ENCODE measurements at regions of chr11 and their contacts with region 1.

Region 1: DNA sequence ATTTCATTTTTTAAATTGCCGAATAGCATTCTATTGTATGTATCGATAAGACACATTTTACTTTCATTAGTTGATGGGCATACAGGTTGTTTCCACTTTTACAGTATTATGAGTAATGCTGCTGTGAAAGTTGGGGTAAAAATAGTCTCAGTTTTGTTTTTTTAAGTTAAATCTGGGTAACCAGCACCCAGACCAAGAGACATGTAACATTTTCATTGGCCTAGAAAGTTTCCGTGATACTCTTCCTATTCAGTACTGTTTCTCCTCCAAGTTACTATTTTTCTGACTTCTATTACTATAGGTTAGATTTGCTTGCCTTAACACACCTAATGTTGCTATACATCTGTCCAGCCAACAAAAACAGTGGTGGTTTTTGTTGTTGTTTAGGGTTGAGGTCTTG is 12.3 kb downstream of the IPO7 start:
- DNase-seq: no peak
- H3K4me3 ChIP-seq: no peak overlapping the region
- H3K27ac ChIP-seq: no peak overlapping the region
- H3K4me1 ChIP-seq: no peaks in the 10 kb centered on the region
- H3K27me3 ChIP-seq: no peaks in the 10 kb centered on the region
- CTCF ChIP-seq: no peak

Region 2: DNA sequence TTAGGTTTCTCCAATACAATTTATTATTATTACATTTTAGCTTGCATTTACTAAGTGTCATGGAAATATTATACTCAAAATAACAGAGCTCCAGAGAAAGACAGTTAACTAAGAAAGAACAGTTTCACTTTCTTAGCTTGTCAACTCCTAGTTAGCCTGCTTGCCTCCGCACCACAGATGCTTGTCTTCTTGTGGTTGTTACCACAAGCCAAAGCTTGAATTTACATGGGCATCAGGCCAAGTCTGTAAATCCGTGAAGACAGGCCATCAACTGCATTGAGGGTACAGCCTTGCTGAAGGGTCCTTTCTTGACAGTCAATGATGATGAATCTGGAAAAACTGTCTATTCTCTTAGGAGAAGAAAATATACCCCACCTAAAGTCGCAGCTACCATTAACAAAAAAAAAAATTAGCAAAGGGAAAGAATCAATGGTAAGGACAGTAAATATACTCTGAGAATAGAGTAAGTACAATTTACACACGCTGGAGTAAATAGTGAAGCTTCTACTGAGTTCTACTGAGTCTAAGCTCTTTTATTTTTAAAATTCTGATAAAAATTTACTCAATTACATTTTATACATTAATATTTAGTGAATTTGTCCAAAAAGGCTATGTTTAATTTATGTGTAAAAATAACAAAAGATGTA is 116.0 kb before region 1 on chr11:
- CTCF ChIA-PET with region 1: no interaction called
- POLR2A ChIA-PET with region 1: no interaction called
- intact Hi-C with region 1: loop called (anchors 10 kb)
- DNase-seq: no peak
- H3K4me3 ChIP-seq: no peak overlapping the region
- H3K27ac ChIP-seq: no peak overlapping the region
- H3K4me1 ChIP-seq: no peaks in the 10 kb centered on the region
- H3K27me3 ChIP-seq: no peaks in the 10 kb centered on the region
- CTCF ChIP-seq: no peak

Region 3: DNA sequence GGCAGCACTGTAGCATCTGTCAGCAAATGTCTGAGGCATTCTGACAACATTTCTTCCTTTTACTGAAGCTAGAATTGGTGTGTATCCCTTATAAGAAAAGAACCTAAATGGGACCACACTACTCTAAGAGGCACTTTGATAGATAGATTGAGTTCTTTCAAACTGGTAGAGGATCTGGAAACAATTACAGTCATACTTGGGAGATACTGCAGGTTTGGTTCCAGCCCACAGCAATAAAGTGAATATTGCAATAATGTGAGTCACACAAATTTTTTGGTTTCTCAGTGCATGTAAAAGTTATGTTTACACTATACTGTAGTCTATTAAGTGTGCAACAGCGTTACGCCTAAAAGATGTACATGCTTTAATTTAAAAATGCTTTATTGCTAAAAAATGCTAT is 800.3 kb after region 1 on chr11:
- CTCF ChIA-PET with region 1: no interaction called
- POLR2A ChIA-PET with region 1: no interaction called
- intact Hi-C with region 1: no loop called
- DNase-seq: no peak
- H3K4me3 ChIP-seq: no peak overlapping the region
- H3K27ac ChIP-seq: no peak overlapping the region
- H3K4me1 ChIP-seq: no peaks in the 10 kb centered on the region
- H3K27me3 ChIP-seq: no peaks in the 10 kb centered on the region
- CTCF ChIP-seq: no peak

Measured in PC-9 (cell line).